ENCODE measurements at regions of chr6 and their contacts with region 1.

Region 1: GRCh38 chr6:35415065-35415991 is 36.8 kb upstream of the FANCE start:
- DNase-seq: peak; percentile 99
- ATAC-seq: peak; percentile 90
- H3K4me3 ChIP-seq: peak overlapping the region; percentile 8; the same call in 1 of the 2 replicates
- H3K27ac ChIP-seq: peak overlapping the region; percentile 97
- H3K4me1 ChIP-seq: peaks cover 25% of the 10 kb centered on the region
- H3K27me3 ChIP-seq: no peaks in the 10 kb centered on the region
- CTCF ChIP-seq: peak; percentile 80

Region 2: GRCh38 chr6:35342258-35343091 is 72.9 kb before region 1 on chr6 and contains the start of gene PPARD:
- CTCF ChIA-PET with region 1: interaction called, 28 read pairs
- POLR2A ChIA-PET with region 1: interaction called, 15 read pairs
- intact Hi-C with region 1: loop called (anchors 1 kb)
- DNase-seq: peak; percentile 99
- ATAC-seq: peak; percentile 92
- H3K4me3 ChIP-seq: peak within 1 kb of the TSS; percentile 98
- H3K27ac ChIP-seq: peak within 1 kb of the TSS; percentile 51
- H3K4me1 ChIP-seq: peaks cover 34% of the 10 kb centered on the region
- H3K27me3 ChIP-seq: no peaks in the 10 kb centered on the region
- CTCF ChIP-seq: peak; percentile 97
- total RNA-seq, gene PPARD: 24.5 and 26.2 TPM in 2 replicates

Region 3: GRCh38 chr6:35391240-35391968 is 23.9 kb before region 1 on chr6:
- CTCF ChIA-PET with region 1: interaction called, 7 read pairs
- POLR2A ChIA-PET with region 1: interaction called, 3 read pairs
- intact Hi-C with region 1: loop called (anchors 1 kb)
- DNase-seq: peak; percentile 99
- ATAC-seq: peak; percentile 75
- H3K4me3 ChIP-seq: peak overlapping the region; percentile 29; the same call in 1 of the 2 replicates
- H3K27ac ChIP-seq: peak overlapping the region; percentile 99
- H3K4me1 ChIP-seq: peaks cover 55% of the 10 kb centered on the region
- H3K27me3 ChIP-seq: no peaks in the 10 kb centered on the region
- CTCF ChIP-seq: peak; percentile 22; the same call in 1 of the 2 replicates

Region 4: DNA sequence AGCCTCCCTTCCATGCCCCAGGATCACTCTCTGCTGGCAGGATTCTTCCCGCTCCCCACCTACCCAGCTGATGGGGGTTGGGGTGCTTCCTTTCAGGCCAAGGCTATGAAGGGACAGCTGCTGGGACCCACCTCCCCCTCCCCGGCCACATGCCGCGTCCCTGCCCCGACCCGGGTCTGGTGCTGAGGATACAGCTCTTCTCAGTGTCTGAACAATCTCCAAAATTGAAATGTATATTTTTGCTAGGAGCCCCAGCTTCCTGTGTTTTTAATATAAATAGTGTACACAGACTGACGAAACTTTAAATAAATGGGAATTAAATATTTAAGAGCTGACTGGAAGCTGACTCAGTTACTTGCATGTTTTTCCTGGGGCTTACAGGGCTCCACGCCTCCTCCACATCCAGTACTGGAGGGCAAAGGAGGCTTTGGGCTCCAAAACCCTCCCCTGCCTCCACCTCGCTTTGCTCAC is 12.6 kb after region 1 on chr6:
- CTCF ChIA-PET with region 1: interaction called, 7 read pairs
- POLR2A ChIA-PET with region 1: no interaction called
- intact Hi-C with region 1: loop called (anchors 1 kb)
- DNase-seq: peak; percentile 95
- ATAC-seq: peak; percentile 82
- H3K4me3 ChIP-seq: peak overlapping the region; percentile 46
- H3K27ac ChIP-seq: peak overlapping the region; percentile 98
- H3K4me1 ChIP-seq: peaks cover 48% of the 10 kb centered on the region
- H3K27me3 ChIP-seq: no peaks in the 10 kb centered on the region
- CTCF ChIP-seq: no peak

Region 5: DNA sequence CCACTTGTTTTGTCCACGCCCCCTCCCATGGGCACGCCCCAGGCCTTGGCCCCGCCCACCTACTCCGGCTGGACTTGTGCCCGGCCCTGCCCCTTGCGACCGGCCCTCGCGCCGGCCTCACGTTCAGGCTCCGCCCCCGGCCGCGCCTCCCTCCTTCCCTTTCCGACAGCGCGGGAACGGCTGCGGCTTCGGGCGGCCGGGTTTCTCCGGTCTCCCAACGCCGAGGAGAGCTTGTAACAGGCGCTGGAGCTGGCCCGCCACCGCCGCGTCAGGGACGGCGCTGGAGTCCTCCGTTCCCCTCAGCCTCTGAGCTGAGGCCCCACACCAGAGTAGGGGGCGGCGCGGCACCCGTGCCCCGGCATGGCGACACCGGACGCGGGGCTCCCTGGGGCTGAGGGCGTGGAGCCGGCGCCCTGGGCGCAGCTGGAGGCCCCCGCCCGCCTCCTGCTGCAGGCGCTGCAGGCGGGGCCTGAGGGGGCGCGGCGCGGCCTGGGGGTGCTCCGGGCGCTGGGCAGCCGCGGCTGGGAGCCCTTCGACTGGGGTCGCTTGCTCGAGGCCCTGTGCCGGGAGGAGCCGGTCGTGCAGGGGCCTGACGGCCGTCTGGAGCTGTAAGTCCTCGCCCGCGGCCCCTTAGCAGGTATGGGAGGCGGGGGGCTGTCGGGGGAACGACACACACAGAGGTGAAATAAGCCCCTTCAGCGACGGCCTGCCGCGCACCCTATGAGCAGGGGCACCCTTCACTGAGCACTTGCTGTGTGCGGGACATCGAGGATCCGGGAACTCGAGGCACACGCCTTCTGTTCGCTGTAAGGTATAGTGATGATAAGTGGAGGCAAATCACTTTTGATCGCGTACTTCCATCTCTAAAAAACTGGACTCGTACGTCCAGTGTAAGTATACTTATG is 37.1 kb after region 1 on chr6 and contains the start of gene FANCE:
- CTCF ChIA-PET with region 1: interaction called, 13 read pairs
- POLR2A ChIA-PET with region 1: no interaction called
- intact Hi-C with region 1: loop called (anchors 1 kb)
- DNase-seq: peak; percentile 95
- ATAC-seq: peak; percentile 79
- H3K4me3 ChIP-seq: peak within 1 kb of the TSS; percentile 79
- H3K27ac ChIP-seq: no peak within 1 kb of the TSS
- H3K4me1 ChIP-seq: peaks cover 19% of the 10 kb centered on the region
- H3K27me3 ChIP-seq: no peaks in the 10 kb centered on the region
- CTCF ChIP-seq: no peak
- total RNA-seq, gene FANCE: 13.8 and 18.6 TPM in 2 replicates

Measured in PC-3 (cell line).